GM18951 (cell line): ENCODE measurements at regions of chr1 and their contacts with region 1.

Region 1: DNA sequence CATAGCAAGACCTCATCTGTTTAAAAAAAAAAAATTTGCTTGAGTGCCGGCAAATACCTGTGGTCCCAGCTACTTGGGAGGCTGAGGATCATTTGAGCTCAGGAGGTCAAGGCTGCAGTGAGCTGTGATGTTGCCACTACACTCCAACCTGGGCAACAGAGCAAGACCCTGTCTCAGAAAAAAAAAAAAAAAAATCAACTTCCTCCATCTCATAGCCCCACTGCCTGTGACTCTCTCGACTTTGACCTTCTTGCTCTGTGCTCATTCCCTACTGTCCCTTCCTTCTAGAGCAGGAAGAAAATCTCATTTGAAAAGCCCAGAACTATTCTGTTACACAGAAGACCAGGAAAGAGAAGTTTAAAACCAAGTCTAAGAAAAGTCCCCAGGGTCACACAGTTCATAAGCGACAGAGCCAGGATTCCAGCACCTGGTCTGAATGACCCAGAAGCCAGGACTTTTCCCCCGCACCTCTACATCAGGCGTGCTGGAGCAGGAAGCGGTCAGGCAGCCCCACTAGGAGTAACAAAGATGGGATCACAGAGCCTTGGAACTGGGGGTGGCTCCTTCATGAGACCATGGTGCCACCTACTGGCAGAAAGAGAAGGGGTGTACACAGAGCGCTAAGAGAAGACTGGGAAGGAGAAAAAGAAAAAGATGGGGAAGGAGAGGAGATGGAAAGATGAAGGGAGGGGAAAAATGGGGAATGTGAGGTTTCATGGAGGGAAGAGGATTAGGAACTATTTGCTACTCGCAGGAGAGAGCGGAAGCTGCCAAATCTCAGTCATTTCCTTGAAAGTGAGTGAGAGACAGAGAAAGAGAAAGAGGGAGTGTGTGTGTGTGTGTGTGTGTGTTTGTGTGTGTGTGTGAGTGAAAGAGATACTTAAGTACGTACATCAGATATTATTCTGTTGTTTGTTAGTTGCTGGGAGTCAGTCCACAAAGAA is 3.1 kb upstream of the P3R3URF start:
- POLR2A ChIP-seq: no peak

Region 2: DNA sequence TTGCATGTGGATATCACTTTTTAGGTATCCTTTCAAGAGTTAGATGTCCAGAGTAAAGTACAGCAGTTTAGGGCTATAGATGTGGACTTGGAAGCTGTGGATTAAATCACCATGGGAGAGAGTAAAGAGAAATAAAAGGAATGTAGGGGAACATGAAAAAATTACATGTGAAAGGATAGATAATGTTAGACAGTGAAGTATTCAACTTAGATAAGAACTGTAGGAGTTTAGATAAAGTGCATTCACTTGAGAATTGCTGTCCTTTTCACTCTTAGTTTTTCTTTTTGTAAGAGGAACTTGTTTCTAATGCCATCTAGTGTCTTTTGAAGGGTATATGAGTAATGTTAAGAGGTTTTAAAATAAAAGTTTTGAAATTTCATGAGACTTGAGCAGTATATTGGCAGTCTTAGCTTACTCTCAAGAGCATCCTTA is 335.9 kb before region 1 on chr1:
- in situ Hi-C with region 1: no loop called
- POLR2A ChIP-seq: no peak

Region 3: GRCh38 chr1:46030876-46031660 is 148.3 kb before region 1 on chr1:
- in situ Hi-C with region 1: loop called (anchors 5 kb)
- POLR2A ChIP-seq: no peak

Region 4: DNA sequence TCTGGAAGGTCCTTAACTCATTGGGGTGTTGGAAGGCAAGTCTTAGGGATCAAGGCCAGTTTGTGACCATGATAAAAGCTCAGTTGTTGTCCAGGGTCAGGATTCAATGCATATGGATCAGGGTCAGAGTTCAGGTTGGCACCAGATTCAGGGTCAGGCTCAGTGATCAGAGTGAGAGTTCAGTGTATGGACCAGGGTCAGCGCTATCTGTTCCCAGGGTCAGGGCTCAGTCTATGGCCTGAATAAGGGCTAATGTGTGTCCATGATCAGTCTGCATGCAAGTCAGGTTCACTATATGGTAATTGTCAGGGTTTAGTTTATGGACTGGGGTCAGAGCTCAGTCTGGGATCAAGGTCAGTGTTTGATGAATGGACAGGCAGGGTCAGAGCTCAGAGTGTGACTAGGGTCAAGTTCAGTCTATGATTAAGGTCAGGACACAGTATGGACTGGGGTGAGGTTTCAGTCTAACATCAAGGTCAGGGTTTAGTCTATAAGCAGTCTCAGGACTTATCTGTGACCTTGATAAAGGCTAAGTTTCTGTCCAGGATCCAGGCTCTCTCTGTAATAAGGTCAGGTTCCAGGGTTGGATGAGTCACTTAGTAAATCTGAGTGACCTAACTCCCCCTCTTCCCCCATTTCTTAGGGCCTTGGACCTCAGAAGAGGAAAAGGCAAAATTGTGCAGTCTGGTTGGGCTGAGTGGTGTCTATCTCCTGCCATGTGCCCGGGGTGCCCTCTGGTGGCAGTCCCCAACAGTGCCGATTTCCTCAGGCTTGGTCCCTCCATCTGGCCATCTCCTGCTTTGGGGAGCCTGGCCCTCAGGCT is 348.3 kb after region 1 on chr1:
- in situ Hi-C with region 1: no loop called
- POLR2A ChIP-seq: no peak